ENCODE measurements at regions of chr10 and their contacts with region 1.

Region 1: DNA sequence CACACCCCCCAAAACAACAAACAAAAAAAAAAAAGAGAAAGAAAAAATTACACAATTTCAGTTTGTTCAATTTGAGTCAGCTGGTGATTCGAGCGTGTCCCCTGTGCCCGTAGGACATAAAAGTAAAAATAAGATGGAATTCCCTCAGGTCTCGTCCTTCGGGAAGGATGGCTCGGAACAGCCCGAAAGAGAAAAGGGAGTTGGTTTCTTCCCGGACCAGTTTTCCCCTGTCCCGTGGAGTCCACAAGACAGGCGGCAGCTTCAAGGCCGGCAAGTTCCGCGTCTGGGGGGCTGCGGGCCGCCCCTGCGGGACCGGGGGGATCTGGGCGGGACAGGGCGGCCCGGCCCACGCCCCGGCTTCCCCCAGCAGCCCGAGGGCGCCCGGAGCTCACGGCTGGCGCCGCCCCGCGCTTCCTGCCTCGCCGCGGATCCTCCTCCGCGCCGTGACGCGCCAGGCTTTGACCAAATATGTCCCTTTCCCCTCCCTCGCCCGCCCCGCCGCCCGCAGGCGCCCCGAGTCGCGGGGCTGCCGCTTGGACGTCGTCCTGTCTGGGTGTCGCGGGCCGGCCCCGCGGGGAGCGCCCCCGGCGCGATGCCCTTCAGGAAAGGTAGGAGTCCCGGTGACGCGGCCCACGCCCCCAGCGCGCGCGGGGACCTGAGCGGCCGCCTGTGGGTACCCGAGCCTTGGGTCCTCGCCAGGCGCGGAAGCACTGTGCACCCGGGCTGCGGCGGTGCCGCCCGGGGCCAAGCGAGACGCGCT is 55.8 kb downstream of the RBM17 start:
- DNase-seq: peak; percentile 83 to 92 (median 87)
- H3K4me3 ChIP-seq: peak overlapping the region; percentile 74
- H3K4me3 Mint-ChIP-seq: peak overlapping the region; percentile 83 to 92 (median 90)
- H3K27ac ChIP-seq: peak overlapping the region; percentile 73
- H3K27ac Mint-ChIP-seq: peak overlapping the region; percentile 38 to 97 (median 88)
- H3K4me1 ChIP-seq: peaks cover 45% of the 10 kb centered on the region
- H3K4me1 Mint-ChIP-seq: peaks cover 58 to 68% (median 62%) of the 10 kb centered on the region in 3 donors
- H3K27me3 ChIP-seq: no peaks in the 10 kb centered on the region
- H3K27me3 Mint-ChIP-seq: peaks cover 0 to 4% of the 10 kb centered on the region in 2 donors

Region 2: GRCh38 chr10:5719546-5719945 is 425.0 kb before region 1 on chr10:
- CTCF ChIA-PET with region 1: no interaction called
- POLR2A ChIA-PET with region 1: no interaction called
- DNase-seq: no peak
- H3K4me3 ChIP-seq: no peak overlapping the region
- H3K4me3 Mint-ChIP-seq: no peak overlapping the region
- H3K27ac ChIP-seq: no peak overlapping the region
- H3K27ac Mint-ChIP-seq: no peak overlapping the region
- H3K4me1 ChIP-seq: no peaks in the 10 kb centered on the region
- H3K4me1 Mint-ChIP-seq: peaks cover 18 to 56% (median 43%) of the 10 kb centered on the region in 3 donors
- H3K27me3 ChIP-seq: no peaks in the 10 kb centered on the region
- H3K27me3 Mint-ChIP-seq: no peaks in the 10 kb centered on the region

Region 3: GRCh38 chr10:6163364-6164270 is 19.0 kb after region 1 on chr10:
- CTCF ChIA-PET with region 1: interaction called, 4 read pairs
- POLR2A ChIA-PET with region 1: interaction called, 11 read pairs
- DNase-seq: peak; percentile 88 to 93 (median 92)
- H3K4me3 ChIP-seq: peak overlapping the region; percentile 74
- H3K4me3 Mint-ChIP-seq: peak overlapping the region; percentile 85 to 96 (median 92)
- H3K27ac ChIP-seq: peak overlapping the region; percentile 95
- H3K27ac Mint-ChIP-seq: peak overlapping the region; percentile 88 to 99 (median 98)
- H3K4me1 ChIP-seq: peaks cover 24% of the 10 kb centered on the region
- H3K4me1 Mint-ChIP-seq: peaks cover 43 to 52% (median 52%) of the 10 kb centered on the region in 3 donors
- H3K27me3 ChIP-seq: no peaks in the 10 kb centered on the region
- H3K27me3 Mint-ChIP-seq: peaks cover 0 to 1% of the 10 kb centered on the region in 2 donors

Region 4: GRCh38 chr10:6320320-6321010 is 175.9 kb after region 1 on chr10:
- CTCF ChIA-PET with region 1: no interaction called
- POLR2A ChIA-PET with region 1: no interaction called
- DNase-seq: no peak
- H3K4me3 ChIP-seq: no peak overlapping the region
- H3K4me3 Mint-ChIP-seq: no peak overlapping the region
- H3K27ac ChIP-seq: no peak overlapping the region
- H3K27ac Mint-ChIP-seq: peak overlapping the region in 1 of 8 donors; percentile 20
- H3K4me1 ChIP-seq: no peaks in the 10 kb centered on the region
- H3K4me1 Mint-ChIP-seq: no peaks in the 10 kb centered on the region
- H3K27me3 ChIP-seq: no peaks in the 10 kb centered on the region
- H3K27me3 Mint-ChIP-seq: no peaks in the 10 kb centered on the region